Heart left ventricle (tissue), 16 donors: ENCODE measurements at regions of chr3 and their contacts with region 1.

Region 1: GRCh38 chr3:193795062-193795720 is 202.2 kb downstream of the OPA1 start:
- DNase-seq: no peak
- ATAC-seq: no peak
- H3K4me3 ChIP-seq: no peak overlapping the region
- H3K27ac ChIP-seq: no peak overlapping the region
- H3K4me1 ChIP-seq: peaks cover 0 to 19% (median 8%) of the 10 kb centered on the region in 12 donors
- H3K27me3 ChIP-seq: peaks cover 0 to 33% (median 2%) of the 10 kb centered on the region in 9 donors
- CTCF ChIP-seq: no peak
- POLR2A ChIP-seq: no peak

Region 2: GRCh38 chr3:193851941-193852674 is 56.9 kb after region 1 on chr3:
- intact Hi-C with region 1: loop called in 1 of 10 experiments (anchors 5 kb)
- DNase-seq: peak in 1 of 5 donors; percentile 42
- ATAC-seq: peak; percentile 47 to 58 (median 54)
- H3K4me3 ChIP-seq: no peak overlapping the region
- H3K27ac ChIP-seq: peak overlapping the region in 4 of 12 donors; percentile 11 to 32 (median 21)
- H3K4me1 ChIP-seq: peaks cover 0 to 29% (median 17%) of the 10 kb centered on the region in 12 donors
- H3K27me3 ChIP-seq: no peaks in the 10 kb centered on the region
- CTCF ChIP-seq: no peak
- POLR2A ChIP-seq: no peak

Region 3: GRCh38 chr3:193863657-193864357 is 68.6 kb after region 1 on chr3:
- intact Hi-C with region 1: loop called in 1 of 10 experiments (anchors 5 kb)
- DNase-seq: peak in 4 of 5 donors; percentile 50 to 67 (median 64)
- ATAC-seq: peak; percentile 85 to 92 (median 88)
- H3K4me3 ChIP-seq: no peak overlapping the region
- H3K27ac ChIP-seq: peak overlapping the region in 10 of 12 donors; percentile 3 to 71 (median 52)
- H3K4me1 ChIP-seq: peaks cover 0 to 46% (median 25%) of the 10 kb centered on the region in 12 donors
- H3K27me3 ChIP-seq: peaks cover 0 to under 1% (median 0%) of the 10 kb centered on the region in 9 donors
- CTCF ChIP-seq: no peak
- POLR2A ChIP-seq: no peak